PC-9 (cell line): ENCODE measurements at regions of chr1 and their contacts with region 1.

Region 1: DNA sequence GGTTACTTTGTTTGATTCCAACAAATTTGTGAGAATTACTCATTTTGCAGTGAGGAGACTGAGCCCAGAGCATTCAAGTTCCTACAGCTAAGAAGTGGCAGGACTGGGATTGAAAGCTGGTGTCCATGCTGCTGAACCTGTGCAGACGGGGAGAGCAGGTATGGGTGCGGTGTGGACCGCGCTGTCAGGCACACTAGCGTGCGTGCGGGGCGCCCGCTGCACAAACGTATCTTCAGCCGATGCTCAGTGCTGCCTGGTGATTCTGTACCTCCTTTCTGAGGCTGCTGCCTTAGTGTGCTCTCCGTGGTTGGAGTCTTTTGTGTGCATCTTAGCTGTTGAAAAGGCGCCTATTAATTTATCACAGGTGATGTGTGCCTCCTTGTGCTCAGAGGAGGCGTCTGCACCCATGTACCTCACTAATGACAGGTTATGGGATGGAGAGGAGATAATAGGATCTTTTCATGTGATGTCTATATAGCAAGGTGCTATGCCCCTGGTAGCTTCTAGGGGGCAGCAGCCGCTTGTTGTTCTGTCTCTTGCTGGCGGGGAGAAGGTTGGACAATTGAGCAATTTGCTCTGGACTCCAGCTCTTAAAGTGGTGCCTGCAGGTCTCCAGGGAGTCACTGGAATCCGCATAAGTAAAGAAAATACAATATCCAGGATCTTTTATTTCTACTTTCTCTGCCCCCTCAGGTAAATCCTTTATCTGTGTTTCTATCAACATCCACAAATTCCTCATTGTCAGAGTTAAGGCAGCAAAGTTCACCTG is 32.5 kb downstream of the PEX14 start:
- DNase-seq: peak; percentile 45 to 49
- H3K4me3 ChIP-seq: no peak overlapping the region
- H3K27ac ChIP-seq: no peak overlapping the region
- H3K4me1 ChIP-seq: peaks cover 28% of the 10 kb centered on the region
- H3K27me3 ChIP-seq: no peaks in the 10 kb centered on the region
- CTCF ChIP-seq: peak; percentile 79

Region 2: DNA sequence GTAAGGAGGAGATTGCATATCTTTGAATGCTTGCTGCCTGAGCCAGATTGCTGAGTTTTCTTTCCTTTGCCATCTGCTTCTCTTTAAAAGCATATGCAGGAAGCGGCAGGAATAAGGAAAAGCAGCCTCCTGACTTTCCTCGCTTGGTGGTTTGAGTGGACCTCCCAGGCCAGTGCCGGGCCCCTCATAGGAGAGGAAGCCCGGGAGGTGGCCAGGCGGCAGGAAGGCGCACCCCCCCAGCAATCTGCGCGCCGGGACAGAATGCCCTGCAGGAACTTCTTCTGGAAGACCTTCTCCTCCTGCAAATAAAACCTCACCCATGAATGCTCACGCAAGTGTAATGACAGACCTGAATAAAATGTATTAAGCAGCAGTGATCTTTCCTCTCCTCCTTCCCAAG is 56.0 kb before region 1 on chr1:
- CTCF ChIA-PET with region 1: no interaction called
- POLR2A ChIA-PET with region 1: no interaction called
- intact Hi-C with region 1: no loop called
- DNase-seq: no peak
- H3K4me3 ChIP-seq: no peak overlapping the region
- H3K27ac ChIP-seq: no peak overlapping the region
- H3K4me1 ChIP-seq: no peaks in the 10 kb centered on the region
- H3K27me3 ChIP-seq: no peaks in the 10 kb centered on the region
- CTCF ChIP-seq: no peak

Region 3: DNA sequence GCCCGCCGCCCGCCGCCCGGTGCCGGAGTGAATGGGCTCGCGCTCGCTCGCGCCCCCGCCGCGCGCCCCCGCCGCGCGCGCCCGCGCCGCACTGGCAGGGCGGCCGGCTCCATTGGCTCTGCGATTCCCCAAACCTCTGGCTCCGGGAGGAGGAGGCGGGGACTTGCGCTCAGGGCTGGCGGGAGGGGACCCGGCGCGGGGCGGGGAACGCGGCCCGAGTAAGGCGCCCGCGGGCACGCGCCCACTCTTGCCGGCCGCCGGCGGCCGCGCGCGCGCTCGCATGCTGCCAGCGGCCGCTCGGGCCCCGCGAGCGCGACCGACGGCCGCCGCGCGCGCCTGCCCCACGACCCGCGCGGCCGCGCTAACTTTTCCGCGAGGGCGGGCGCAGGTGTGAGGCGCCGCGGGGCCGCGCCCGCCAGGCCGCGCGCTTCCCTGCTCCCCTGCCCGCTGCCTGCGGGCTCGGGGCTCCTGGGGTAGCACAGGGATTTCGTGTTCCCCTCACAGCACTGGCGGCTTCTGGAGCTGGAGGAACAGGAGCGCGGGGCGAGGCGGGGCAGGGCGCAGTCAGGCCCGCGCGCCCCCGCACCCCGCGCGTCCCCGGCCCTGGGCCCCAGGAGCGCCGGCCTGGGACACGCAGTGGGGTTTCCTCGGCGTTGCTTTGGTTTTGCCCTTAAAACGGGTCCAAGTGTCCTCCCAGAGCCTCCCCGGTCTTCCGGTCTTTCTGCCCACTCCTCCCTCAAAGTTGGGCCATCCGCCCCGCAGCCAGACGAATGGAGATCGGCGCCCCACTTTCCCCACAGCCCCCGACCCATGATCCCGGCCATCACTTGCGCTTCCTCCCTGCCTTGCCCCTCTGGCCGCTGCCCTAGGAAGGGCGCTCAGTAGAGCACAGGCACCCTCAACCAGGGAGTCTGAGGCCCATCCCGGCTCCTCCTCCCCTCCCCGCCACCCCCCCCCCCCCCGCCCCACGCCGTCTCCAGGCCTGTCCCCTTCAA is 187.6 kb after region 1 on chr1:
- CTCF ChIA-PET with region 1: no interaction called
- POLR2A ChIA-PET with region 1: no interaction called
- intact Hi-C with region 1: loop called (anchors 5 kb)
- DNase-seq: peak; percentile 58 to 89
- H3K4me3 ChIP-seq: peak overlapping the region; percentile 46; the same call in 1 of the 2 replicates
- H3K27ac ChIP-seq: no peak overlapping the region
- H3K4me1 ChIP-seq: peaks cover 32% of the 10 kb centered on the region
- H3K27me3 ChIP-seq: no peaks in the 10 kb centered on the region
- CTCF ChIP-seq: no peak

Region 4: DNA sequence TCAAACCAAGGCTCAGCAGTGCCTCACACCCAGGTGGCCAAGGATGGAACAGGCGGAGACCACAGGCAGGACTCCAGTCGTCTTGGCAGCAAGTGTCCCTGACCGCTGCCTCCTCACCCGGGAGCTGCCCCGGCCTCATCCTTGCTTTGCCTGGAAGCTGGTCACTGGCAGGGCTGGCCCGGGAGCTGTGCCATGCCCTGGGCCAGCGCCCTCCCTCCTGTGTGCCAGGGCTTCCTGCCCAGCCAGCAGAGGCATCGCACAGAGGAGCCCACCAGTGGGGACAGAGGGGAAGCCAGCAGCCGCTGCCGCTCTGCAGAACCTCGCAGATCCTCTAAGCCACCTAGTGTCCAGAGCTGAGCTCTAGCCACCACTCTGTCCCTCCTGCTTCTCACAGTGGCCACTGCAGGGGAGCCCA is 281.3 kb after region 1 on chr1:
- CTCF ChIA-PET with region 1: interaction called, 10 read pairs
- POLR2A ChIA-PET with region 1: no interaction called
- intact Hi-C with region 1: no loop called
- DNase-seq: no peak
- H3K4me3 ChIP-seq: no peak overlapping the region
- H3K27ac ChIP-seq: no peak overlapping the region
- H3K4me1 ChIP-seq: peaks cover 19% of the 10 kb centered on the region
- H3K27me3 ChIP-seq: no peaks in the 10 kb centered on the region
- CTCF ChIP-seq: no peak

Region 5: DNA sequence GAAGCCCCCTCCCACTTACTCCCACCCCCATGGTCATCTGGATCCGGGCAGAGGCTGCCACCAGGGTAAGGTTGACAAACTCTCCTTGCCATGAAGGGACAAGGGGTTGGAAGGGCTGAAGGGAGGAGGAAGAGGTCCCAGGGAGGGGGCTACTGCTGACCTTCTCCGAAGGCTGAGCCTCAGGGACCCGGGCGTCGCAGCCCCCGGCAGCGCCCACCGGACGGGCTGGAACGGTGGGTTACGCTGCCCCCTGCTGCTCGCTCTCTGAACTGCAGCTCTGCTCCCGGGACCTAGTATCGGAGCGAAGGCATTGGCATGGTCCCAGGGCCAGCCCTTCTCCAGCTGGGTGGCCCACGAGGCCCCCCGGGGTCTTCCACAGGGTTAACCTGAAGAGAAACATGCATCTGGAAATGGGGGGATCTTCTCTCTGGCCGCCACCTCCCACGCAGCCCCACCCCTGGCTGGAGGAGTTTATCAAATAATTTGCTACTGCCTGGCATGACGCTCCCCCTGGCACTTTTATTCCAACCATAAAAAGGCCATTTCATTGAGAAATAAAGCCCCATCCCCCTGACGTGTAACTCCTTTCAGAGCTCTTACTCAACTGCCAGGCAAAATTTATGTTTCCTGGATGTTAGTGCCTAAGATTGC is 434.7 kb after region 1 on chr1:
- CTCF ChIA-PET with region 1: interaction called, 7 read pairs
- POLR2A ChIA-PET with region 1: no interaction called
- intact Hi-C with region 1: loop called (anchors 5 kb)
- DNase-seq: peak in 1 of 2 experiments; percentile 43
- H3K4me3 ChIP-seq: no peak overlapping the region
- H3K27ac ChIP-seq: no peak overlapping the region
- H3K4me1 ChIP-seq: no peaks in the 10 kb centered on the region
- H3K27me3 ChIP-seq: no peaks in the 10 kb centered on the region
- CTCF ChIP-seq: peak; percentile 93

Region 6: DNA sequence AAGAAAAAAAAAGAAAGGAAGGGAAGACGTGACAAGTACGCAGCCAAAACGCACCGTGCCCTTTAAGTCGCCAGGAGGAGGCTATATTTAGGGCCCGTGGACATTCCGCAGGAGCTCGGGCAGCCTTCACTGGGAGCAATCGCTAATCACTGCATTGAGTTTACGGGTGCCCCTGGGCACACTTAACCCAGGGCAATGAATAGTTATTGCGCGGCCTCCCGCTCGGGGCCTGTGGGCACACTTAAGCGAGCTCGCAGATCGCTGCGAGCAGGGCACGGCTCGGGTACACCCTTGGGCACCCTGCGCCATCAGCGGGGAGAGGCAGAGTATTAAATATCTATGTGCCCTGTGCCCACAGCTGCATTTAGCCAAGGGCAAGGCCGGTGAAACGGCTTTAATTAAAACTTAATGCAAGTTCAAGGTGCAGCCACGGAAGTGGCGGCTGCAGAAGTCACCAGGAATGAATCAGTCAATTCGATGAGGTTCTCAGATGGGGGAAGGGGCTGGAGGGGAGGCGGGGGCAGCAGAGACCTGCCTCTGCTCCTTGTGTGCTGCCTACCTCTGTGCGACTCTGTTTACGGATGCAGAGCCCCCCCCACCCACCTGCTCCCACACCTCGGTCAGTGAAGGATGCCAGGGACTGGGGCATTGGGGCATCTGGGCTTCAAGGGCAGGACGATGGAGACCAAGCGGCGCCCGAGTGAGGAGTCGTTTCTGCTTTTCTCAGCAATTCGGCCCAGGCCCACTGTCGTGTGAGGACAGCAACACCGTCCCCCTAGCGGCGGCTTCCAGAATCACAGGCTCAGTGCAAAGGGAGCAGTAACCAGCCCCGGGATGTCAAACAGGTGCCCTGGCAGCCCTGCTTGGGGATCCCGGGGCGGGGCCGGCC is 453.4 kb after region 1 on chr1:
- CTCF ChIA-PET with region 1: no interaction called
- POLR2A ChIA-PET with region 1: interaction called, 20 read pairs
- intact Hi-C with region 1: no loop called
- DNase-seq: peak in 1 of 2 experiments; percentile 74
- H3K4me3 ChIP-seq: no peak overlapping the region
- H3K27ac ChIP-seq: no peak overlapping the region
- H3K4me1 ChIP-seq: peaks cover 5% of the 10 kb centered on the region
- H3K27me3 ChIP-seq: no peaks in the 10 kb centered on the region
- CTCF ChIP-seq: peak; percentile 82

Region 7: DNA sequence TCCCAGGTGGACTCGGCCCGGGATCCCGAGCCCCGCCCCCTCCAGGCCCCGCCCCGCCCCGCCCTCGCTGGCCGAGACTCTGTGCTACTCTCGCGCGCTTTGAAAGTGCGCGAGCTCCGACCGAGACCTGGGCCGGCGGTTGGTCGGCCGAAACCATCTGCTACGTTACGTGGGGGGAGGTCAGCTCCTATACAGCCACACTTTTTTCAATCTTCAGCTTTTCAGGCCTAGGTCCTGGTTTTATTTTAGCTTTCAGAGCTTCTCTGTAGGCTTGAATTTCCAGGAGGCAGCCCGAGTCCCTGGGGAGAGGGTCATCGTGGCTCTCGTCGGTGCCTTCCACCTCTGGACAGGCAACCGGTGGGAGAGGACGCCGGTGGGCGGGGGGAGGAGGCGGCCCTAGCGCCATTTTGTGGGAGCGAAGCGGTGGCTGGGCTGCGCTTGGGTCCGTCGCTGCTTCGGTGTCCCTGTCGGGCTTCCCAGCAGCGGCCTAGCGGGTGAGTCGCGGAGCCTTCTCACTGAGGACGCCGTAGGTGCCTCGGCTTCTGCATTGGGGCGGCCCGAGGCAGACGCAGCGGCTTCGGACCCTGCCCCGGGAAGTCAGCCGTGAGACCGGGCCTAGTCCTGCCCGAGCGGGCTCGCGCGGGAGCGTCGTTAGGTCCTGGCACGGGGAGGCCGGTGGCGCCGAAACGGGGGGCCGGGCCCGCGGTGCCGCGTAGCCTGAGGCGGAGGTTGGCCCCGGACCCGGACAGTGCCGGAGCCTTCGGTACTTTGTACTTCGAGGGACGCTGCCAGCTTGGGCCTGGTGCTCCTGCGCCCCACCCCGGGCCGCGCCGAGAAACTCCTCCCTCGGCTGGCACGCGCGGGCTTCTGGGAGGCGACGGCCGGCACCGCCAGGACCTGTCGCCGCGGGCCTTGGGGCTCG is 505.2 kb after region 1 on chr1 and contains the start of gene TARDBP:
- CTCF ChIA-PET with region 1: interaction called, 3 read pairs
- POLR2A ChIA-PET with region 1: no interaction called
- intact Hi-C with region 1: loop called (anchors 10 kb)
- DNase-seq: peak; percentile 57 to 85
- H3K4me3 ChIP-seq: peak within 1 kb of the TSS; percentile 93
- H3K27ac ChIP-seq: peak within 1 kb of the TSS; percentile 95
- H3K4me1 ChIP-seq: peaks cover 11% of the 10 kb centered on the region
- H3K27me3 ChIP-seq: no peaks in the 10 kb centered on the region
- CTCF ChIP-seq: no peak
- total RNA-seq, gene TARDBP: 142 and 177 TPM in 2 replicates